ENCODE measurements at regions of chr4 and their contacts with region 1.

Region 1: GRCh38 chr4:101328063-101328602 is 19.2 kb downstream of the PPP3CA start:
- DNase-seq: peak in 3 of 9 experiments; percentile 27 to 84 (median 70)
- ATAC-seq: peak; percentile 84
- H3K4me3 ChIP-seq: peak overlapping the region; percentile 15
- H3K4me3 Mint-ChIP-seq: peak overlapping the region; percentile 70
- H3K27ac ChIP-seq: peak overlapping the region; percentile 20 to 71
- H3K27ac Mint-ChIP-seq: peak overlapping the region; percentile 91
- H3K4me1 ChIP-seq: peaks cover 28% of the 10 kb centered on the region
- H3K4me1 Mint-ChIP-seq: peaks cover 68% of the 10 kb centered on the region
- H3K27me3 ChIP-seq: no peaks in the 10 kb centered on the region
- H3K27me3 Mint-ChIP-seq: no peaks in the 10 kb centered on the region
- CTCF ChIP-seq: no peak

Region 2: DNA sequence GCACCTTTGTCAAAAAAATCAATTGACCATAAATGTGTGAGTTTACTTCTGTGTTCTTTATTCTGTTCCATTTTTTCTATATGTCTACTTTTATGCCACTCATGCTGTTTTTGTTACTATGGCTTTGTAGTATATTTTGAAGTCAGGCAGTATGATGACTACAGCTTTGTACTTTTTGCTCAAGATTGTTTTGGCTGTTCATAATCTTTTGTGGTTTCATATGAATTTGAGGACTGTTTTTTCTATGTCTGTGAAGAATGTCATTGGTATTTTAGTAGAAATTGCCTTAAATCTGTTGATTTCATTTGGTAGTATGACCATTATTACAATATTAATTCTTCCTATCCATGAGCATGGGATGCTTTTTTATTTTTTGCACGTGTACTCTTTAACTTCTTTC is 327.6 kb before region 1 on chr4:
- CTCF ChIA-PET with region 1: no interaction called
- POLR2A ChIA-PET with region 1: no interaction called
- intact Hi-C with region 1: no loop called
- DNase-seq: no peak
- ATAC-seq: no peak
- H3K4me3 ChIP-seq: no peak overlapping the region
- H3K4me3 Mint-ChIP-seq: no peak overlapping the region
- H3K27ac ChIP-seq: no peak overlapping the region
- H3K27ac Mint-ChIP-seq: no peak overlapping the region
- H3K4me1 ChIP-seq: no peaks in the 10 kb centered on the region
- H3K4me1 Mint-ChIP-seq: no peaks in the 10 kb centered on the region
- H3K27me3 ChIP-seq: no peaks in the 10 kb centered on the region
- H3K27me3 Mint-ChIP-seq: no peaks in the 10 kb centered on the region
- CTCF ChIP-seq: no peak

Region 3: DNA sequence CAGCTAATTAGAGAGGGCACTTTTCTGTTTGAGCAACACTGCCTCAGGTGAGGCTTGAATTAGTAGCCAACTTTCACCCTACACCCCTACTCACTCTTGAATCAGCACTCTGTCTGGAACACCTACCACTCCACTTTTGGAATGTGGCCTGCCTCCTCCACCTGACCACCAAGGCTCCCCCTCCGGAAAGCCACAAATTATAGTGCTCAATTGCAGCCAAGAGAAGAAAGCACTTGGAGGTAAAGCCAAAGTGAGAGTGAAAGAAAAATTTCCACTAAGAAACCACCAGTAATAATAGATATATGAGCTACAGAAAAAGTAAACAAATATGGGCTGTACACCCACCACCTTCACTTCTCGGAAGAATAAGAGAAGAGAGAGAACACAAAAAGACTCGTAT is 21.9 kb before region 1 on chr4:
- CTCF ChIA-PET with region 1: no interaction called
- POLR2A ChIA-PET with region 1: interaction called, 3 read pairs
- intact Hi-C with region 1: loop called (anchors 1 to 2 kb)
- DNase-seq: peak in 1 of 9 experiments; percentile 20
- ATAC-seq: no peak
- H3K4me3 ChIP-seq: no peak overlapping the region
- H3K4me3 Mint-ChIP-seq: peak overlapping the region; percentile 19
- H3K27ac ChIP-seq: no peak overlapping the region
- H3K27ac Mint-ChIP-seq: no peak overlapping the region
- H3K4me1 ChIP-seq: peaks cover 17% of the 10 kb centered on the region
- H3K4me1 Mint-ChIP-seq: peaks cover 41% of the 10 kb centered on the region
- H3K27me3 ChIP-seq: no peaks in the 10 kb centered on the region
- H3K27me3 Mint-ChIP-seq: no peaks in the 10 kb centered on the region
- CTCF ChIP-seq: no peak

Measured in CD8-positive, alpha-beta T cell (primary cell).